ENCODE measurements at regions of chr10 and their contacts with region 1.

Region 1: DNA sequence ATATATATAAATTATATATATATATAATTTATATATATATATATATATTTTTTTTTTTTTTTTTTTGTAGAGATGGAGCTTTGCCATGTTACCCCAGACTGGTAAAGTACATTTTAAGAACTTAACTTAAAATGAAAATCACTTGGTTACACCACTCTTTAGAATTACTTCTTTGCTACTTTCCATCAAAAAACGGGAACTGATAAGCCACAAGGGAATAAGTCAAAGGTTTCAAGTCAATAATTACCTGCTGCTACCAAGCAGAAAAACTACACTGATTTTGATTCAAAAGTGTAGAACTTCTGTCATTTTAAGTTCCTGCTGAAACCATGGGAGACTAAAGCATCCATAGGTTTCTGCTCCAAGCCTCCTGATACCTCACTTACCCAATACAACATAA is 12.2 kb downstream of the PPA1 start:
- DNase-seq: no peak
- H3K4me3 ChIP-seq: no peak overlapping the region
- H3K27ac ChIP-seq: peak overlapping the region in 1 of 2 experiments; percentile 45; a peak in 3 of 4 replicates
- H3K4me1 ChIP-seq: peaks cover 0 to 4% of the 10 kb centered on the region in 2 experiments; a peak in 2 of 4 replicates
- H3K27me3 ChIP-seq: no peaks in the 10 kb centered on the region
- CTCF ChIP-seq: no peak
- EP300 ChIP-seq: no peak
- RAD21 ChIP-seq: no peak

Region 2: GRCh38 chr10:70176441-70176840 is 44.6 kb before region 1 on chr10:
- CTCF ChIA-PET with region 1: no interaction called
- POLR2A ChIA-PET with region 1: no interaction called
- DNase-seq: no peak
- H3K4me3 ChIP-seq: no peak overlapping the region
- H3K27ac ChIP-seq: no peak overlapping the region
- H3K4me1 ChIP-seq: no peaks in the 10 kb centered on the region; a peak in 1 of 4 replicates
- H3K27me3 ChIP-seq: no peaks in the 10 kb centered on the region
- CTCF ChIP-seq: no peak
- EP300 ChIP-seq: no peak
- RAD21 ChIP-seq: no peak

Region 3: DNA sequence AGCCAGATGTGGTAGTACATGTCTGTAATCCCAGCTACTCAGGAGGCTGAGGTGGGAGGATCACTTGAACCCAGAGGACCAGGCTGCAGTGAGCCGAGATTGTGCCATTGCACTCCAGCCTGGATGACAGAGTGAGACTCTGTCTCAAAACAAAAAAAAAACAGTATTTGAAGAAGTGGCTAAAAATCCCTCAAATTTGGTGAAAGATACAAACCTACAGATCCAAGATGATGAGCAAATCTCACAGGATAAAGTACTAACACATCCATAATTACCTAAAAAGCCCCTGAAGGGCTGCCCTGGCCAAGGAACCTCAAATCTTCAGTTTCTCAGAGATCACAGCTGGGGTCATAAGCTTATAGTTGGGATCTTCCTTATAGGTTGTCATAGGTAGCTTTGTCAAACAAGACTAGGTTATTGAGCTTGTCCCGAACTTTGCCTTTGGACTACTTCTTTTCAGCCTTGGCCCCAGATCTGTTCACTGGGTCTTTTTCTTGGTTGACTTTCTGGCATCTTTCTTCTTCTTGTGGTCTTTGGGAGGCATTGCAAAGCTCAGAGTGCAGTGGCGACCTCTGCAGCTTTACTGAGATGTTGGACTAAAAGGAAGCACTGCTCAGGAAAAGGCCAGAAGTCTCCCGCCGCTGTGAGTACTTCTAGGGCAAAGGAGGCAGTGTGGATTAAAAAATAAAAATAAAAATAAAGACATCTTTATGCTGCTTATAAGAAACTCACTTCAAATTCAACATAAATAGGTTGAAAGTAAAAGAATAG is 22.1 kb before region 1 on chr10:
- CTCF ChIA-PET with region 1: interaction called, 10 read pairs
- POLR2A ChIA-PET with region 1: no interaction called
- DNase-seq: no peak
- H3K4me3 ChIP-seq: no peak overlapping the region
- H3K27ac ChIP-seq: no peak overlapping the region
- H3K4me1 ChIP-seq: no peaks in the 10 kb centered on the region
- H3K27me3 ChIP-seq: no peaks in the 10 kb centered on the region
- CTCF ChIP-seq: no peak
- EP300 ChIP-seq: no peak
- RAD21 ChIP-seq: no peak

Region 4: DNA sequence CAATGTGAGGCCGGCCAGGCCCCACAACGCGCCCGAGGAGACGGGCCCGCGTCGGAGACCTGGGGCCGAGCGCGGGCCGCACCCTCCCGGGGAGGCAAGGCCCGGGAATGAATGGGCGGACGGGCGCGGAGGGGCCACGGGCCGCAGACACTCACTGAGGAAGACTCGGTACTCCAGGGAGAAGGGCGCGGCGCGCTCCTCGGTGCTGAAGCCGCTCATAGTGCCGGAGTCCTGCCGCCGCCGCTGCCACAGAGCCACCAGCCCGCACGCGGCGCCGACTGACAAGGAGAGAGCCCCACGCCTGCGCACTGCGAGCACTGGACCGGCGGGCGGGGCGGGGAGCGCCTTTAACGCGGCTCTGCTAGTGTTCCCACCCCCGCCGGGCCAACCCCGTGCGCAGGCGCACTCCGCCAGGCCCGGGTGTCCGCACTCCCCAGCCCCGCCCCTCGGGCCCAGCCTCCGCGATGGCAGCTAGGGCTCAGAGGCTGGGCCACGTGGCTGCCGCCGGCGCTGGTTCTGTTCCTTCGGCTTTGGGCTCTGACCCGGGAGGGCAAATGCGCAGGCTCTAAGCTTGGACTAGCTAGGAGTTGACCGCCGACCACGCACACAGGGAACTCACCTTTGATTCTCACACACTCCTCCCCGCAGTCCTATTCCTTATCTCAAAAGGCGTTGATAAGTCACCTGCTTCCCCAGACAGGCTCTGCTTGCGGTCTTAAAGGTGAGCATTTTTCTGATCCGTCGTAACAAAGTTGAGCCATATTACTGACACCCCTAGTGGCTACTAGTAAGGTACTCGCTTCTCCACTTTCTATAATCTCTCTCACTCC is 12.3 kb after region 1 on chr10 and contains the start of gene PPA1:
- CTCF ChIA-PET with region 1: interaction called, 24 read pairs
- POLR2A ChIA-PET with region 1: interaction called, 3 read pairs
- DNase-seq: peak; percentile 100
- H3K4me3 ChIP-seq: peak within 1 kb of the TSS; percentile 93 to 94
- H3K27ac ChIP-seq: peak within 1 kb of the TSS; percentile 51 to 55
- H3K4me1 ChIP-seq: peaks cover 0 to 6% of the 10 kb centered on the region in 2 experiments; a peak in 3 of 4 replicates
- H3K27me3 ChIP-seq: no peaks in the 10 kb centered on the region
- CTCF ChIP-seq: peak; percentile 29
- EP300 ChIP-seq: no peak
- RAD21 ChIP-seq: 0 out of 2 replicates have a peak, but pooled peaks have one; percentile 3
- polyA plus RNA-seq, gene PPA1: 116 and 125 TPM in 2 replicates

Region 5: DNA sequence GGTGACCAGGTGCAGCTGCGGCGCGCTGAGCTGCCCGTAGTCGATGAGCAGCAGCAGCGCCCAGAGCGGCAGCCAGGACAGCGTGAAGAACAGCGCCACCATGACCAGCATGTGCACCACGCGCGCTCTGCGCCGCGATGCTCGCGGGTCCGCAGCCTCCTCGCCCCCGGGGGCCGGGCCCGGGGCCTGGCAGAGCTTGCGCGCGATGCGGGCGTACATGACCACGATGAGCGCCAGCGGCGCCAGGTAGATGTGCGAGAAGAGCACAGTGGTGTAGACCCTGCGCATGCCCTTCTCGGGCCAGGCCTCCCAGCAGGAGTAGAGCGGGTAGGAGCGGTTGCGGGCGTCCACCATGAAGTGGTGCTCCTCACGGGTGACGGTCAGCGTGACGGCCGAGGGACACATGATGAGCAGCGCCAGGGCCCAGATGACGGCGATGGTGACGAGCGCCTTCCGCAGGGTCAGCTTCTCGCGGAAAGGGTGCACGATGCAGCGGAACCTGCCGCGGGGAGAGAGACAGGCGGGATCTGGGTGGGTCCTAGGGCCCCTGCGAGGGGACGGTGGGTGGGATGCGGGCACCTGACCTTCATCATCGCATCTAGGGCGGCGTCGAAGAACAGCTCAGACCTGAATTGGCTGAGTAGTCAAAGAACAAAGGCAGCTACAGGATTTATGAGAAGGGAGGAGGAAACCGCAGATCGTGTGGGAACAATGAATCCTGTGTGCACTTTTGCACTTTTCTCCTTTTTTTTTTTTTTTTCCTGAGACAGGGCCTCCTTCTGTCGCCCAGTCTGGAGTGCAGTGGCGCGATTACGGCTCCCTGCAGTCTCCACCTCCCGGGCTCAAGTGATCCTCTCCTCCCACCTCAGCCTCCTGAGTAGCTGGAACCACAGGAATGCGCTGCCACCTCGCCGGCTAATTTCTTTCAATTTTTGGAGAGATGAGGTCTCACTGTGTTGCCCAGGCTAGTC is 34.6 kb after region 1 on chr10:
- CTCF ChIA-PET with region 1: no interaction called
- POLR2A ChIA-PET with region 1: no interaction called
- DNase-seq: no peak
- H3K4me3 ChIP-seq: no peak overlapping the region
- H3K27ac ChIP-seq: no peak overlapping the region
- H3K4me1 ChIP-seq: no peaks in the 10 kb centered on the region
- H3K27me3 ChIP-seq: no peaks in the 10 kb centered on the region; the same call in 1 of the 2 replicates
- CTCF ChIP-seq: no peak
- EP300 ChIP-seq: no peak
- RAD21 ChIP-seq: no peak

Region 6: DNA sequence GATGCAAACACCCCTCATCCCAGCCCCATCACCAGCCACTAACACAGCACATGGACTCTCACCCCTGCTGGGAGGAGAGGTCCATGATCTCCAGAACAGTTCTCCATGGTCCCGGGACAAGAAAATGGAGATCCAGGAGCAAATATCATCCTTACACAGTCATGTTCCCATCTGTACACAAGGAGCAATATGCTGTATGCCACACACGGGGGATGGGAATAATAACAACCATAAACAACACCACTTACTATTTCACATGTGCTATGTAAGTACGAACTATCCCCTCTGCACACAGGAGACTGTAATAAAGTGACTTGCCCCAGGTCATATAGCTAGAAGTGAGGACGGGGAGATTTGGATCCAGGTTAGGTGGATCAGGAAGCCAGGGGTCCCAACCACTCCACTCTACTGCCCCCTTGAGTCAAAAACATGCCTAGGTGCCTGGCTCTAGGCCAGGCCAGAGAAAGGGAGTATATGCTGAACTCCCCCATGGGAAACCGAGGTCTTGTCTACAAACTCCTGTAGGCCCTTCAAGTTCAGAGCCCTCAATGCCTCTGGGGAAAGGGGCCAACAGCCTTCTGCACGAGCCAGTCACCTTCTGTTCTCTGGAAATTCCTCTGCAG is 127.3 kb after region 1 on chr10:
- CTCF ChIA-PET with region 1: interaction called, 15 read pairs
- POLR2A ChIA-PET with region 1: no interaction called
- DNase-seq: peak; percentile 60
- H3K4me3 ChIP-seq: no peak overlapping the region
- H3K27ac ChIP-seq: no peak overlapping the region
- H3K4me1 ChIP-seq: peaks cover 0 to 10% of the 10 kb centered on the region in 2 experiments; a peak in 3 of 4 replicates
- H3K27me3 ChIP-seq: no peaks in the 10 kb centered on the region
- CTCF ChIP-seq: peak; percentile 68
- EP300 ChIP-seq: no peak
- RAD21 ChIP-seq: peak; percentile 70

Region 7: GRCh38 chr10:70374775-70375614 is 154.0 kb after region 1 on chr10:
- CTCF ChIA-PET with region 1: interaction called, 10 read pairs
- POLR2A ChIA-PET with region 1: no interaction called
- DNase-seq: no peak
- H3K4me3 ChIP-seq: no peak overlapping the region
- H3K27ac ChIP-seq: no peak overlapping the region
- H3K4me1 ChIP-seq: peaks cover 10 to 13% of the 10 kb centered on the region in 2 experiments; a peak in 2 of 4 replicates
- H3K27me3 ChIP-seq: no peaks in the 10 kb centered on the region
- CTCF ChIP-seq: no peak
- EP300 ChIP-seq: no peak
- RAD21 ChIP-seq: no peak

Region 8: DNA sequence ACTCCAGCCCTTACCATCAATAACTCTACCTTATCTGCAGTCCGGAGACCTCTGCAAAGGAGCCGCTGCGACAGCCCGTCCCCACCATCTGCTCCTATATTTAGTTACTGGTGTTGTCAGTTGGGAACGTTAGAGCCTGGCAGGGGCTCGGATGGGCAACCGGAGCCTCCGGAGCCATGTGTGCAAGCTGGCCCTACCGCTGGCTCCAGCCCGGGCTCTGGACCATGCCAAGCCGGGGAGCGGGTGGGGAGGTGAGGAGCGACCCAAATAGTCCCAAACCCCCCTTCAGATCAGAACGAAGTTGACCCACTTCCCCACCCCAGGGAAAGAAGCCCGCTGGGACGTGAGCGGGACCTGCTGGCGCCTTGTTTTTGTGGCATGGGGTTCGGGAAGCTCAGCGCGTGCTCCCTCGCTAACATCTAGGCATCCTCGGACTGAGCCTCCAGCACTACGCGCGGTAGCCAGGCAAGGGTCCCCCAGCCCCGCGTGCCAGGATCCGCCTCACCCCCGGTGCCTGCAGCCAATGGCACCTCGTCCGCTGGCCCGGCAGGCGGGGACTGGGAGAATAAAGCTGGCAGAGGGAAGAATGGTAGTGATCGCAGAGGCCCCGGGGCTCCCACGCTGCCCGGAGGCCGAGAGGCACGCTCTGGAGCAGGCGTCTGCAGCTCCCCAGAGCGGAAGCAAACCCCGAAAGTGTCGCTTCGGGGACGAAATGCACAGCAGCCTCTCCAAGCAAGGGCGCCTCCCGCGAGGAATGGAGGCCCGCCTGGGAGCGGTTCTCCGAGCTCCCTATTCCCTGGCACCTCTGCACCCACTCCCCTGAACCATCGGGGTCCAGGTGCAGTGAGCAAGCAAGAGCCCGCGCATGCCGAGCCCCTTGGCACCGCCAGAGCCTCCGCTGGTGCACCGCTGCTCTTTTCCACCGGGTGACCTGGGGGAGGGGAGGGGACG is 160.7 kb after region 1 on chr10:
- CTCF ChIA-PET with region 1: interaction called, 11 read pairs
- POLR2A ChIA-PET with region 1: no interaction called
- DNase-seq: peak; percentile 92
- H3K4me3 ChIP-seq: peak overlapping the region; percentile 89 to 96
- H3K27ac ChIP-seq: peak overlapping the region; percentile 38 to 89
- H3K4me1 ChIP-seq: peaks cover 11 to 20% of the 10 kb centered on the region in 2 experiments; a peak in 3 of 4 replicates
- H3K27me3 ChIP-seq: no peaks in the 10 kb centered on the region
- CTCF ChIP-seq: 0 out of 2 replicates have a peak, but pooled peaks have one; percentile 31
- EP300 ChIP-seq: no peak
- RAD21 ChIP-seq: no peak

Region 9: DNA sequence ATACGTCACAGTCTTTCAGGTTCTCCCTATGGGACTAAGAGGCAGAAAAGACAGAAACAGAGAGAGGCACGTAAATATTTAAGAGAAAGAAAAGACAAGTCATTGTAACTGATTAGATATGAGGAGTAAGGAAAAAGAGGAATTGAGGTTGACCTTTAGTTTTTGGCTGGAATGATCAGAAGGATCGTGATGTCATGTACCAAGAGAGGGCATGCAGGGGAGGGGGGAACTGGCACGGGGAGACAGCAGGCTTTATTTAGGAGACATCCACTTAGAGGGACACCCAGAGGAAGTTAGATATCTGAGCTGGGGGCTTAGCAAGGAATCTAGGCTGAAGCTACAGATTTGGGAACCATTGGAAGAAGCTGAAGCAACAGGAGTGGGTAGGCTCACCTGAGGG is 170.6 kb after region 1 on chr10:
- CTCF ChIA-PET with region 1: interaction called, 12 read pairs
- POLR2A ChIA-PET with region 1: no interaction called
- DNase-seq: no peak
- H3K4me3 ChIP-seq: no peak overlapping the region
- H3K27ac ChIP-seq: no peak overlapping the region
- H3K4me1 ChIP-seq: no peaks in the 10 kb centered on the region
- H3K27me3 ChIP-seq: no peaks in the 10 kb centered on the region; the same call in 1 of the 2 replicates
- CTCF ChIP-seq: no peak
- EP300 ChIP-seq: no peak
- RAD21 ChIP-seq: no peak

Region 10: DNA sequence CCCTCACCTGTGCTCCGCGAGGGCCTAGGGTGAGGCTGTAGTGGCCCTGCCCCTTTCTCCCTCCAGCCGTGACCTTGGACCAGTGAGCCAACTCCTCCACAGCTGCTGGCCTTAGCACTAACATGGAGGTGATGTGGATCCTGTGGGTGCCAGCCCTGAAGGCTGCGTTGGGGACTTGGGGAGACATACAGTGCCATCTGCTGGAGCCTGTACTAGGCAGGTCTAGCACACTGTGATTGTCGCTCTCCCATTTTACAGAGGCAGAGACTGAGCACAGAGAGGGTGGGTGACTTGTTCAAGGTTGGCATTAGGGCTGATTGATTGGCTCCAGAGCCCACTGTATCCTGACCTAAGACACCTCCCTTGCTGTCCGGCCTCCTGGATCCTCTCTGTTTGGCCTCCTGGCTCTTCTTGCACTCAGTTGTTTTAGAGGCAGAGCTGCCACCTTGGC is 343.9 kb after region 1 on chr10:
- CTCF ChIA-PET with region 1: no interaction called
- POLR2A ChIA-PET with region 1: no interaction called
- DNase-seq: no peak
- H3K4me3 ChIP-seq: no peak overlapping the region
- H3K27ac ChIP-seq: no peak overlapping the region; a peak in 1 of 4 replicates
- H3K4me1 ChIP-seq: peaks cover 0 to 45% of the 10 kb centered on the region in 2 experiments; a peak in 1 of 4 replicates
- H3K27me3 ChIP-seq: no peaks in the 10 kb centered on the region
- CTCF ChIP-seq: no peak
- EP300 ChIP-seq: no peak
- RAD21 ChIP-seq: 0 out of 2 replicates have a peak, but pooled peaks have one; percentile 9

Region 11: GRCh38 chr10:70753026-70753663 is 532.1 kb after region 1 on chr10:
- CTCF ChIA-PET with region 1: no interaction called
- POLR2A ChIA-PET with region 1: no interaction called
- DNase-seq: no peak
- H3K4me3 ChIP-seq: no peak overlapping the region
- H3K27ac ChIP-seq: no peak overlapping the region
- H3K4me1 ChIP-seq: peaks cover 0 to 8% of the 10 kb centered on the region in 2 experiments; a peak in 1 of 4 replicates
- H3K27me3 ChIP-seq: no peaks in the 10 kb centered on the region
- CTCF ChIP-seq: no peak
- EP300 ChIP-seq: no peak
- RAD21 ChIP-seq: no peak